HCT116 (cell line): ENCODE measurements at regions of chr3 and their contacts with region 1.

Region 1: DNA sequence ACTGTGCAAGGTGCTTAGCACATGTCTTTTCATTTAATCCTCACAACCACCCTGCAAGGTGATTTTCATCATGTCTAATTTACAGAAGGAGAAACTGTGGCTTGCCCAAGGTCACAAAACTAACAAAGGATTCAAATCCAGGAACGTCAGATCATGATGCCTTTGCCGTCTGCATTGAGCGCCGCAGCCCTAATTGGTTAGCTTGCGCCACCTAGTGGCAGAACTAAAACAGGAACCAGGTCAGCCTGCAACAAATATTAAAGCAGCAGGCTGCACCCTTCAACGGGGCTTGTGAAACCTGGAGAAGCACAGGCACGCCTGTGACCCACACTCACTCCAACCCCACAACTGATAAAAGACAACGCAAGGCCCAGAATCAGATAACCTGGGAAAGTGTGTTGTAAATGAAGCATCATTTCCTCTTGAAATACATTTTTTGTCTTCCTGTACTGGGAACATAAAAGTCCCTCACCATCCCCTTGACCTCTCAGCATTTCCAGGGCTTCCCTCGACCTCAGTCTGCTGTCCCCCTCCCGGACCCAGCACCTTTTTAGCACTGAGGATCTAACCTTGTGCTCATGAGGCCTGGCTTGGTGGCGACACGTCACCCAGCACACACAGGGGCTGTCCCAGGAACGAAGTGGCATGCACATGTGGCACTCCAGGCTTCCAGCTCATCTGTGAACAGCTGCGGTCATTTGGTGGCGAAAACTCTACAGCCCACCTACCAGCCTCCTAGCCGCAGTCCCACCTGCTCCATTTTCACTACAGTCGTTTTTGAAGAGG is 17.3 kb downstream of the DPH3 start:
- DNase-seq: peak; percentile 66
- ATAC-seq: peak; percentile 88
- H3K4me3 ChIP-seq: no peak overlapping the region
- H3K27ac ChIP-seq: no peak overlapping the region
- H3K4me1 ChIP-seq: peaks cover 0 to 15% of the 10 kb centered on the region in 2 experiments; a peak in 1 of 4 replicates
- H3K27me3 ChIP-seq: no peaks in the 10 kb centered on the region
- CTCF ChIP-seq: peak; percentile 82 to 97 (median 93)
- POLR2A ChIP-seq: no peak
- RAD21 ChIP-seq: peak; percentile 97

Region 2: DNA sequence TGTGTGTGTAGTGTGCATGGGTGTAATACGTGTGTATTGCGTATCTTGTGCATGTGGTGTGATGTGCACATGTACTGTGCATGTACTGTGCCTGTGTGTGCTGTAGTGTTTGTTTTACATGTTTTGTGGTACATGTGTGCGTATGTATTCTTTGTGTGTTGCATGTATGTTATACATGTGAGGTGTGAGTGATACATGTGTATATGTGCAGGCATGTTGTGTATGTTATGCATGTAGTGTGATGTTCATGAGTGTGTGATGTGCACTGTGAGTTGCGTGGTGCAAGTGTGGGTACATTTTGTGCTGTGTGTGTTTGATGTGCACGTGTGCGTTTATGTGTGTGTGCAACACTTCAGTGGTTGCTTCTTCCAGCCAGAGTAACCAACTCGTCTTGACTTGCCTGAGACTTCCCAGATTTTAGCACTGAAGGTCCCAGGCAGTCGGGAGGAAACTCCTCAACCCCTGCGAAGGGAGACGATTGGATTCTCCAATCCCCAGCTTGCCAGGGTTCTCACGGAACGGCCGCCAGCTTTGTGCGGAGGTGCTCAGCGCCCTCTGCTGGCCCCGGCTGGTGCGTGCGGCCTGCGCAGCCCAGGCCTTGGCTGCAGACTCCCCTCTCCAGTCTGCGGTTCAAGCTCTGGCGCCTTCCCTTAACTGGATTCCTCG is 69.4 kb before region 1 on chr3:
- CTCF ChIA-PET with region 1: interaction called, 6 read pairs
- POLR2A ChIA-PET with region 1: no interaction called
- RAD21 ChIA-PET with region 1: no interaction called
- intact Hi-C with region 1: loop called (anchors 2 kb)
- DNase-seq: peak; percentile 38
- ATAC-seq: peak; percentile 97
- H3K4me3 ChIP-seq: no peak overlapping the region
- H3K27ac ChIP-seq: no peak overlapping the region
- H3K4me1 ChIP-seq: peaks cover 0 to 9% of the 10 kb centered on the region in 2 experiments; a peak in 1 of 4 replicates
- H3K27me3 ChIP-seq: no peaks in the 10 kb centered on the region
- CTCF ChIP-seq: peak; percentile 88 to 98 (median 96)
- POLR2A ChIP-seq: no peak
- RAD21 ChIP-seq: peak; percentile 98